ENCODE measurements at regions of chr5 and their contacts with region 1.

Region 1: DNA sequence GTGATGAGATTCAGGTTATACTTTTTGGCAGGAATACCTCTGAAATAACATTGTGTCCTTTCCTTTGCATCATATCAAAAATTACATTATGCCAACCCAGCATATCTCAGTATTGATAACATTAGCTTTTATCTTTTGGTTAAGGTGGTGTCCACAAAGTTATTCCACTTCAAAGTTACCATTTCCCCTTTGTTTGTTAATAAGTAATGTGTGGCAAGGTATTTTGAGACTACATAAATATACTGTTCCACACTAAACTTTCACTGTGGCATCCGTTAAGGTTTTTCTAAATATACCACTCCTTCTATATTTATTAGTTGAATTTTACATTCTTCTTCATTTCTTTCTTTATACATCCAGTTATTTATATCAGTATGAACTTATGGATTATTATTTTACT is 14.1 kb upstream of the ARHGEF37 start:
- DNase-seq: no peak
- H3K4me3 ChIP-seq: no peak overlapping the region
- H3K27ac ChIP-seq: no peak overlapping the region
- H3K4me1 ChIP-seq: peaks cover 7 to 10% of the 10 kb centered on the region in 2 donors
- H3K27me3 ChIP-seq: no peaks in the 10 kb centered on the region
- CTCF ChIP-seq: no peak
- POLR2A ChIP-seq: no peak

Region 2: GRCh38 chr5:149141224-149141956 is 425.8 kb before region 1 on chr5 and contains the start of gene ABLIM3:
- intact Hi-C with region 1: no loop called
- DNase-seq: peak; percentile 53 to 79
- H3K4me3 ChIP-seq: peak within 1 kb of the TSS; percentile 58 to 65
- H3K27ac ChIP-seq: peak within 1 kb of the TSS; percentile 78 to 87
- H3K4me1 ChIP-seq: peaks cover 7 to 12% of the 10 kb centered on the region in 2 donors
- H3K27me3 ChIP-seq: no peaks in the 10 kb centered on the region
- CTCF ChIP-seq: peak; percentile 81 to 94 (median 86)
- POLR2A ChIP-seq: peak in 1 of 2 donors; percentile 25
- total RNA-seq, gene ABLIM3: 2.6 to 49.5 (median 6.9) TPM

Region 3: GRCh38 chr5:149367249-149367971 is 199.8 kb before region 1 on chr5:
- intact Hi-C with region 1: loop called (anchors 5 kb)
- DNase-seq: peak; percentile 71 to 80
- H3K4me3 ChIP-seq: no peak overlapping the region
- H3K27ac ChIP-seq: peak overlapping the region in 1 of 2 donors; percentile 35
- H3K4me1 ChIP-seq: no peaks in the 10 kb centered on the region
- H3K27me3 ChIP-seq: no peaks in the 10 kb centered on the region
- CTCF ChIP-seq: peak; percentile 75 to 83 (median 77)
- POLR2A ChIP-seq: no peak

Region 4: GRCh38 chr5:149434162-149435014 is 132.8 kb before region 1 on chr5:
- intact Hi-C with region 1: no loop called
- DNase-seq: peak; percentile 74 to 86
- H3K4me3 ChIP-seq: no peak overlapping the region
- H3K27ac ChIP-seq: peak overlapping the region; percentile 99
- H3K4me1 ChIP-seq: no peaks in the 10 kb centered on the region
- H3K27me3 ChIP-seq: no peaks in the 10 kb centered on the region
- CTCF ChIP-seq: peak; percentile 76 to 85 (median 80)
- POLR2A ChIP-seq: no peak

Region 5: DNA sequence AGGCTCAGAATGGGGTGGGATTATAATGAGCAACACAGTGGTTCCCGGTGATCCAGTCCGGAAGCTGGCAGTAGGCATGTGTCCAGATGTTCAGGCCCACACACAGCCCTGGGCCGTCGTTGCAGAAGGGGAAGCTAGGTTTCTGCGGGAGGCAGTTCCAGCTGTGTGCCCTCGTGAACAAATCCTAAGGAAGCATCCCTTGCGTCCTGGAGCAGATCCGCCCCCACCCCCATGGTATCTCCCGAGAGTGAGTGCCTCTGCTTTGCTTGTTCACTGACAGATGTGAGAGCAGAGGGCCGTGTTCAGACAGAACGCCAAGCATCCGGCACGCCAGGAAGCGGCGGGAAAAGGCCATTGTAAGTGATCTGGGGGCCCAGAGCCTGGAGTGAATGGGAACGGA is 272.5 kb after region 1 on chr5:
- intact Hi-C with region 1: no loop called
- DNase-seq: no peak
- H3K4me3 ChIP-seq: no peak overlapping the region
- H3K27ac ChIP-seq: no peak overlapping the region
- H3K4me1 ChIP-seq: no peaks in the 10 kb centered on the region
- H3K27me3 ChIP-seq: no peaks in the 10 kb centered on the region
- CTCF ChIP-seq: no peak
- POLR2A ChIP-seq: no peak

Measured in uterus (tissue), 4 donors.